Lower lobe of right lung (tissue), 2 donors: ENCODE measurements at regions of chr2 and their contacts with region 1.

Region 1: GRCh38 chr2:170984079-170984478 is 55.0 kb downstream of the GORASP2 start:
- DNase-seq: no peak
- ATAC-seq: no peak
- H3K4me3 ChIP-seq: no peak overlapping the region
- H3K27ac ChIP-seq: no peak overlapping the region
- H3K4me1 ChIP-seq: no peaks in the 10 kb centered on the region
- H3K27me3 ChIP-seq: peaks cover 4% of the 10 kb centered on the region
- CTCF ChIP-seq: no peak

Region 2: GRCh38 chr2:171416009-171416926 is 432.2 kb after region 1 on chr2:
- intact Hi-C with region 1: loop called (anchors 10 kb)
- DNase-seq: peak; percentile 82
- ATAC-seq: peak; percentile 95 to 97
- H3K4me3 ChIP-seq: no peak overlapping the region
- H3K27ac ChIP-seq: no peak overlapping the region
- H3K4me1 ChIP-seq: peaks cover 4% of the 10 kb centered on the region
- H3K27me3 ChIP-seq: no peaks in the 10 kb centered on the region
- CTCF ChIP-seq: peak; percentile 81

Region 3: GRCh38 chr2:171433763-171434670 is 449.9 kb after region 1 on chr2 and contains the starts of genes DCAF17 and METTL8:
- intact Hi-C with region 1: no loop called
- DNase-seq: peak; percentile 97
- ATAC-seq: peak; percentile 99
- H3K4me3 ChIP-seq: peak within 1 kb of the TSS; percentile 88
- H3K27ac ChIP-seq: peak within 1 kb of the TSS; percentile 98
- H3K4me1 ChIP-seq: peaks cover 9% of the 10 kb centered on the region
- H3K27me3 ChIP-seq: no peaks in the 10 kb centered on the region
- CTCF ChIP-seq: peak; percentile 50
- total RNA-seq, gene DCAF17: 15.6 TPM
- total RNA-seq, gene METTL8: 12.9 TPM

Region 4: GRCh38 chr2:171723724-171724683 is 739.9 kb after region 1 on chr2:
- intact Hi-C with region 1: no loop called
- DNase-seq: no peak
- ATAC-seq: no peak
- H3K4me3 ChIP-seq: no peak overlapping the region
- H3K27ac ChIP-seq: no peak overlapping the region
- H3K4me1 ChIP-seq: no peaks in the 10 kb centered on the region
- H3K27me3 ChIP-seq: no peaks in the 10 kb centered on the region
- CTCF ChIP-seq: no peak